PC-9 (cell line): ENCODE measurements at regions of chr2 and their contacts with region 1.

Region 1: DNA sequence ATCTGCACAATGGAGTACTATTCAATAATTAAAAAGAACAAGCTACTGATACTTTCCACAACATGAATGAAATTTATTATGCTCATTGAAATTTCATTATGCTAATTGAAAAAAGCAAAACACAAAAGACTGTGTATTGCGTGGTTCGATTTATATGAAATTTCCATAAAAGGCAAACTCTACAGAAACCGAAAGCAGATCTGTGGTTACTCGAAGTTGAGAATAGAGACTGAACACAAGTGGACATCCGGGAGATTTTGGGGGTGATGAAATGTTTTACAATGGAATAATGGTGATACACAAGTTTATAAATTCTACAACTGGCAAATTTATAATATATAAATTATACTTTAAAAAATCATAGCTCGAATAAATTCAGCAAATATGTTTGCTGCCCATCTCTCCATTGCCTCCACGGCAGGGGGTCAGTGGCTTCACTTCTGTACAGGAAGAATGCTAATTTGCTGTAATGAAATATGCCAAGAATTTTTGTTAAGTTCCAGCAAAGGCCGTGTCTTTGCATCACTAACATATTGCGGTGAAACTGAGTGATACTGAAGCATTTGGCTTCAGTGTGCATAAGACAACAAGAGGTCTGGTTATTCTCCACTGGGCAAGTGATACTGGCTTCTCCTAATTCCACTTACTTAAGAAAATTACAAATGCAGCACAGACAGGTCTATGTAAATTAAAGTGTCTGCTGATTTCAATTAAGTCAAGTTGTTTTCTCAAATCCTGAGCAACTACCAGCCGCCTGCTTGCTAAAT is 96.7 kb downstream of the TMEM163 start:
- DNase-seq: no peak
- H3K4me3 ChIP-seq: no peak overlapping the region
- H3K27ac ChIP-seq: no peak overlapping the region
- H3K4me1 ChIP-seq: no peaks in the 10 kb centered on the region
- H3K27me3 ChIP-seq: no peaks in the 10 kb centered on the region
- CTCF ChIP-seq: no peak

Region 2: DNA sequence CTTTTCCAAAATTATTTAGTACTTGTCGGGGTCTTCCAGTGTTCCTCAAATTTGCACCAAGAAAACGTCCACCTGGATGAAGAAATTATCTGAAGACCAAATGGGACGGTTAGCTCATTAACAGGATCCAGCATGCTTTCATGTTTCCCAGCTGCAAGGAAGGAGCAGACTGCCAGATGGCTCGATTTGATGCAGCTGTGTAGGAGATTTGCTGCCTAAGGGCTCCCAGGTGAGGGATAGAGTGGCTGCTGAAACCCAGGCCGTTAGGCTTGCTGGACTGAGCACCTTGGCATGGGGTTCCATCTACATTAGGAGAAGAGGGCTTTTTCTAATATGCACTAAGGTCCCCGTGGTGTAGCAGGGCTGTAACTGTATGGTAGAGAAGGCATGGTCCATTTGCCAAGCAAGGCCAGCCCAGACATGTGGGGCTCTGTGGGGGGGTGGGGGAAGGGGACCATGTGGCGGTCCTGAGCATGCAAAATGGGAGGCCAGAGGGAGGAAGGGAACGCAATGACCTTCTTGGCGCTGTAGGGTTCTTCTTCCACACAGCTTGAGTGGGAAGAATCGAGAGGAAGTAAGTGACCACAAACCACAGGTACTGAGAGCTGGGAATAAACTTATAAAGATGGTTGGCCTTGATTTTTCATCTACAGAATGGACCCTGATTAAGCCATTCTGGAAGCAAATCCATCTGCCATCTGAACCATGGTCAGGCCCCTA is 47.4 kb before region 1 on chr2:
- CTCF ChIA-PET with region 1: no interaction called
- POLR2A ChIA-PET with region 1: no interaction called
- intact Hi-C with region 1: no loop called
- DNase-seq: no peak
- H3K4me3 ChIP-seq: no peak overlapping the region
- H3K27ac ChIP-seq: no peak overlapping the region
- H3K4me1 ChIP-seq: no peaks in the 10 kb centered on the region
- H3K27me3 ChIP-seq: no peaks in the 10 kb centered on the region
- CTCF ChIP-seq: no peak

Region 3: DNA sequence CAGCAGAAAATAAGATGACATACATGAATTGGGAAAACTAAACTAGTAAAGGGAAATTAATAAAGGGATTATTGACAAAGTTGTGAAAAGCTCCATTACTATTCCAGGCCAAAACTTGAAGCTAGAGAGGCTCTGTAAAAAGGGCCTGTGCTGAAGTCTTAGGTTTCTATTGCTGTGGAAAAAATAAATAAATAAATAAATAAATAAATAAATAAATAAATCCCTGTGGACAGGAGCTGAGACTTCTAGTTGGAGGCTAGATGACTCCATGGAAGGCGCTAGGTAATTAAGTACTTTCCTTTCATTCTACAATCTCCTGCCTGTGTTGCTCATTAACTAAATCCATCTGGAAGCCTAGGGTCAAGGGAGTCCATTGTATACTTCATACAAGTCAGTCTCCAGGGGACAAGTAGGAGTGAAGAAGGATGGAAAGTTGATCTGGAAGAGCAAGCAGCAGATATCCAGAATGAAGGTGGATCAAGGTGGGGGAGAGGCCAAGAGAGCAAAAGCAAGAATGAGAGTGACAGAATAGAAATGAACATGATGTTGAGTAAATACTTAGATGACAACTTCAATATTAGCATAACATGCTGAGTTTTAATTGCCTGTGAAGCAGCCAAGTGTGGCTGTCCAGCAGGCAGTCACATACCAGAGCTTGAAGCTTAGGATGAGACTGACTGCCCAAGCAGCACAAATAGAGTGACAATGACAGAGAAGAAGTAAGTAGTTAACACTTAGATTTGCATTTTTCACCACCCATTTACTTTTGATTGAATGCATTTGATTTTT is 270.4 kb after region 1 on chr2:
- CTCF ChIA-PET with region 1: no interaction called
- POLR2A ChIA-PET with region 1: interaction called, 11 read pairs
- intact Hi-C with region 1: no loop called
- DNase-seq: no peak
- H3K4me3 ChIP-seq: no peak overlapping the region
- H3K27ac ChIP-seq: no peak overlapping the region
- H3K4me1 ChIP-seq: no peaks in the 10 kb centered on the region
- H3K27me3 ChIP-seq: no peaks in the 10 kb centered on the region
- CTCF ChIP-seq: no peak